GM12878 (cell line): ENCODE measurements at regions of chr10 and their contacts with region 1.

Region 1: DNA sequence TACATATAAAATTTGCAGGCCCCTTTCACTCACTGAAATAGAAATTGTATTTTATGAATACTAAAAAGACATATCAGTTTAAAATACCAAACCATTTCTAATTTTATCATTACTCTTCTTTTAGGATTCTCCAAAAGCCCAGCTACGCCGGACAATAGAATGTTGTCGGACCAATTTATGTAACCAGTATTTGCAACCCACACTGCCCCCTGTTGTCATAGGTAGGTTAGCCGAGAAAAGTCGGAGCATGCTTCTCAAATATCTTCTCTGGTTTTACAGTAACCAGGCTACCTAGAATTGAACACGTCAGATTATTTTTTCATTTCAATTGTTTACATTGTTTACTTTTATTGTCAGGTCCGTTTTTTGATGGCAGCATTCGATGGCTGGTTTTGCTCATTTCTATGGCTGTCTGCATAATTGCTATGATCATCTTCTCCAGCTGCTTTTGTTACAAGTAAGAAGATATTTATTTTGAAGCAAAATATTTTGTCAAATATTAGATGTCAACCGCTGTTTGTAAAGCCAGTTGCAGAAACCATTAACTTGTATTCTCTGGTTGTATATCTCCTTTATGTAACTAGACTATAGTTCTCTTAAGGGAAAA is 57.6 kb downstream of the MMRN2 start:
- DNase-seq: no peak
- ATAC-seq: peak; percentile 79
- H3K4me3 ChIP-seq: no peak overlapping the region
- H3K27ac ChIP-seq: no peak overlapping the region
- H3K4me1 ChIP-seq: no peaks in the 10 kb centered on the region
- H3K27me3 ChIP-seq: no peaks in the 10 kb centered on the region
- CTCF ChIP-seq: peak; percentile 63 to 73 (median 63)
- EP300 ChIP-seq: no peak
- POLR2A ChIP-seq: no peak
- RAD21 ChIP-seq: peak; percentile 88

Region 2: DNA sequence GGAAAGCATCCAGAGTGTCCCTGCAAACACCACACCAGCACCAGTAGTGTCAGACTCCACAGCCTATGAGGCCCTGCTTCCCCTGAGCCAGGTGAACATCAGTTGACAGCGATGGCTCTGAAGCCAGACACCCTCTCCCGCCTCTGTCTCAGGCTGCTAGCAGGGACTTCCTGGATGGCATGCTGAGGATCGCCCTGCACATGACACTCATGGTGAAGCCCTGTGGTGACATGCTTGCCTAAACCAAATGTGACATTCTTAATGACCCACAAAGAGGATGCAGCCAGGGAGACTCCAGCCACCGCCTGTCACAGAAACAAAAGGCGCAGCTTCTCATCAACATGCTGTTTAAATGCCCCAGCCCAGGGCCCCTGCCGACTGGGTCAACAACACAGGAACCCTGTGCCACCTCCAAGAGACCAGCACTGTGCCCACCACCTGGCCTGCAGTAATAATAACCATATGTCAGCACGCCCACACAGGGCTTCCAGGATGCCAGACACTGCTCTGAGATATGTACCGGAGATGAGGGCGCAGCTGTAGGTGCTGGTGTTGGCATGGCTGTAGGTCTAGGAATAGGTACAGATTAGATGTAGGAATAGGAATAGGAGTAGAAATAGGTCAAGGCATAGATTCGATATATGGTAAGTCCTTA is 614.5 kb before region 1 on chr10:
- CTCF ChIA-PET with region 1: no interaction called
- POLR2A ChIA-PET with region 1: no interaction called
- RAD21 ChIA-PET with region 1: no interaction called
- SMC1A ChIA-PET with region 1: no interaction called
- in situ Hi-C with region 1: no loop called
- intact Hi-C with region 1: no loop called
- DNase-seq: no peak
- ATAC-seq: no peak
- H3K4me3 ChIP-seq: no peak overlapping the region
- H3K27ac ChIP-seq: no peak overlapping the region
- H3K4me1 ChIP-seq: no peaks in the 10 kb centered on the region
- H3K27me3 ChIP-seq: no peaks in the 10 kb centered on the region; a peak in 1 of 4 replicates
- CTCF ChIP-seq: no peak
- EP300 ChIP-seq: no peak
- POLR2A ChIP-seq: no peak
- RAD21 ChIP-seq: no peak

Region 3: GRCh38 chr10:86644152-86644793 is 255.5 kb before region 1 on chr10:
- CTCF ChIA-PET with region 1: interaction called, 11 read pairs
- POLR2A ChIA-PET with region 1: no interaction called
- RAD21 ChIA-PET with region 1: no interaction called
- SMC1A ChIA-PET with region 1: interaction called, 3 read pairs
- in situ Hi-C with region 1: no loop called
- intact Hi-C with region 1: no loop called
- DNase-seq: peak; percentile 20
- ATAC-seq: peak; percentile 75
- H3K4me3 ChIP-seq: no peak overlapping the region
- H3K27ac ChIP-seq: no peak overlapping the region
- H3K4me1 ChIP-seq: peaks cover 18% of the 10 kb centered on the region
- H3K27me3 ChIP-seq: no peaks in the 10 kb centered on the region
- CTCF ChIP-seq: peak; percentile 18 to 31 (median 23); a peak in 3 of 6 replicates
- EP300 ChIP-seq: no peak
- POLR2A ChIP-seq: no peak
- RAD21 ChIP-seq: 0 out of 2 replicates have a peak, but pooled peaks have one; percentile 11

Region 4: GRCh38 chr10:86688398-86688921 is 211.3 kb before region 1 on chr10:
- CTCF ChIA-PET with region 1: interaction called, 86 read pairs
- POLR2A ChIA-PET with region 1: no interaction called
- RAD21 ChIA-PET with region 1: interaction called, 16 read pairs
- SMC1A ChIA-PET with region 1: interaction called, 19 read pairs
- in situ Hi-C with region 1: no loop called
- intact Hi-C with region 1: loop called (anchors 1 kb)
- DNase-seq: no peak
- ATAC-seq: peak; percentile 90
- H3K4me3 ChIP-seq: no peak overlapping the region
- H3K27ac ChIP-seq: no peak overlapping the region
- H3K4me1 ChIP-seq: no peaks in the 10 kb centered on the region
- H3K27me3 ChIP-seq: no peaks in the 10 kb centered on the region; a peak in 2 of 4 replicates
- CTCF ChIP-seq: peak; percentile 80 to 89 (median 81)
- EP300 ChIP-seq: no peak
- POLR2A ChIP-seq: no peak
- RAD21 ChIP-seq: peak; percentile 87

Region 5: GRCh38 chr10:86693721-86694369 is 205.9 kb before region 1 on chr10:
- CTCF ChIA-PET with region 1: interaction called, 86 read pairs
- POLR2A ChIA-PET with region 1: no interaction called
- RAD21 ChIA-PET with region 1: interaction called, 16 read pairs
- SMC1A ChIA-PET with region 1: interaction called, 19 read pairs
- in situ Hi-C with region 1: no loop called
- intact Hi-C with region 1: loop called (anchors 1 kb)
- DNase-seq: no peak
- ATAC-seq: peak; percentile 78
- H3K4me3 ChIP-seq: no peak overlapping the region
- H3K27ac ChIP-seq: no peak overlapping the region
- H3K4me1 ChIP-seq: no peaks in the 10 kb centered on the region
- H3K27me3 ChIP-seq: peaks cover 0 to 2% of the 10 kb centered on the region in 2 experiments; a peak in 3 of 4 replicates
- CTCF ChIP-seq: peak; percentile 63 to 77 (median 69)
- EP300 ChIP-seq: no peak
- POLR2A ChIP-seq: no peak
- RAD21 ChIP-seq: peak; percentile 59

Region 6: GRCh38 chr10:86699991-86700840 is 199.6 kb before region 1 on chr10:
- CTCF ChIA-PET with region 1: interaction called, 86 read pairs
- POLR2A ChIA-PET with region 1: interaction called, 3 read pairs
- RAD21 ChIA-PET with region 1: interaction called, 13 read pairs
- SMC1A ChIA-PET with region 1: interaction called, 12 read pairs
- in situ Hi-C with region 1: loop called (anchors 5 kb)
- intact Hi-C with region 1: no loop called
- DNase-seq: no peak
- ATAC-seq: no peak
- H3K4me3 ChIP-seq: no peak overlapping the region
- H3K27ac ChIP-seq: no peak overlapping the region
- H3K4me1 ChIP-seq: no peaks in the 10 kb centered on the region
- H3K27me3 ChIP-seq: peaks cover 0 to under 1% of the 10 kb centered on the region in 2 experiments; a peak in 2 of 4 replicates
- CTCF ChIP-seq: no peak
- EP300 ChIP-seq: no peak
- POLR2A ChIP-seq: no peak
- RAD21 ChIP-seq: no peak

Region 7: GRCh38 chr10:86710987-86711512 is 188.7 kb before region 1 on chr10:
- CTCF ChIA-PET with region 1: interaction called, 24 read pairs
- POLR2A ChIA-PET with region 1: interaction called, 3 read pairs
- RAD21 ChIA-PET with region 1: interaction called, 12 read pairs
- SMC1A ChIA-PET with region 1: interaction called, 9 read pairs
- in situ Hi-C with region 1: no loop called
- intact Hi-C with region 1: loop called (anchors 1 kb)
- DNase-seq: peak; percentile 45
- ATAC-seq: peak; percentile 94
- H3K4me3 ChIP-seq: peak overlapping the region; percentile 92
- H3K27ac ChIP-seq: peak overlapping the region; percentile 73
- H3K4me1 ChIP-seq: peaks cover 4% of the 10 kb centered on the region; the same call in 1 of the 2 replicates
- H3K27me3 ChIP-seq: no peaks in the 10 kb centered on the region
- CTCF ChIP-seq: peak; percentile 73 to 98 (median 90); a peak in 5 of 6 replicates
- EP300 ChIP-seq: no peak
- POLR2A ChIP-seq: peak; percentile 81
- RAD21 ChIP-seq: peak; percentile 77

Region 8: GRCh38 chr10:86888585-86889381 is 11.0 kb before region 1 on chr10:
- CTCF ChIA-PET with region 1: interaction called, 16 read pairs
- POLR2A ChIA-PET with region 1: no interaction called
- RAD21 ChIA-PET with region 1: no interaction called
- SMC1A ChIA-PET with region 1: interaction called, 11 read pairs
- in situ Hi-C with region 1: no loop called
- intact Hi-C with region 1: no loop called
- DNase-seq: peak; percentile 88
- ATAC-seq: peak; percentile 99
- H3K4me3 ChIP-seq: no peak overlapping the region
- H3K27ac ChIP-seq: peak overlapping the region; percentile 45
- H3K4me1 ChIP-seq: peaks cover 6% of the 10 kb centered on the region; the same call in 1 of the 2 replicates
- H3K27me3 ChIP-seq: no peaks in the 10 kb centered on the region
- CTCF ChIP-seq: no peak
- EP300 ChIP-seq: peak; percentile 32 to 81; a peak in 3 of 4 replicates
- POLR2A ChIP-seq: no peak
- RAD21 ChIP-seq: 0 out of 2 replicates have a peak, but pooled peaks have one; percentile 1